ENCODE measurements at regions of chr12 and their contacts with region 1.

Region 1: GRCh38 chr12:97022536-97023230 is 115.6 kb downstream of the NEDD1 start:
- DNase-seq: no peak

Region 2: GRCh38 chr12:98397316-98398105 is 1374.8 kb after region 1 on chr12:
- in situ Hi-C with region 1: loop called (anchors 25 kb)
- DNase-seq: peak; percentile 85